Psoas muscle (tissue), 8 donors: ENCODE measurements at regions of chr2 and their contacts with region 1.

Region 1: DNA sequence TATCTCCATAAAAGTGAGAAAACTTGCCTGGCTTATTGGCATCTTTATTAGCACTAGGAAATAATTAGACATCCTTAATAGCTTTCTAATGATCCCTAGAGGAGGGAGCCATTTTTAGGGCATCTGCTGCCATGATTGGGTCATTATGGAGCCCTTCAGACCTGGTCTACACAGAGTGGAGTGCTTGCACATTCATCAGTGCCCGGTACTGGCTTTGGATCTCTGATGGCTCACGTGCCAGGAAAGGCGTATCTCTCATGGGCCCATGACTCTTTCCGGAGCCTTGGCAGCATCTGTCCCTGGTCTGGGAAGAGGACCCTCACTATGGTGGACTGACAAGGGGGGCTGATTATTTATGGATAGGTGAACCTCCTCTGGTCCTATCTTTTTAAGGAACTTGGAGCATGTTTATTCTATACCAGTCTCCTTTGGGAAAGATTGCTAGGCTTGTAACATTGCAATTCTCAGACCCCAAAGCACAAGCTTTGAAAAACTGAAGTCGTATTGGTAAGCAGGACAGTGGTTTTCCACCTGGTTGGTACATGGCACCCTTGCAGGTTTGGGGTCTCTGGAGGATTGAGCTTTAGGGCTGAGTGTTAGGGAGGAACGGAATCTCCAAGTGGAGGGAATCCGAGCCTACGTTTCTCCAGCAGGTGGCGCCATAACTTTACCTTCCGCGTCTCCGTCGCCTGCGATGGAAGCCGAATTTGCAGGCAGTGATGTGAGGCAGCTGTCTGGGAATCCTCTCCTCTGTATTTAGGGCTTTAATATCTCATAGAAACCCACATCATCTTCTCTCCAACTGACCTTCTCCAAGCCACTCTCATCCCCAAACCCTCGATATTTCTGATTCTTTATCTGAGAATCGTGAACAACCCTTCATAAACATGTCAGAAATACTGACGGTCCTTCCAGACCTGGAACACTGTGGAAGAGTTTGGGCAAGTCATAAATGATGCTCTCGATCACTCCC is 27.8 kb downstream of the SIX2 start:
- DNase-seq: peak; percentile 71 to 84
- ATAC-seq: peak; percentile 84 to 99 (median 90)
- H3K4me3 ChIP-seq: no peak overlapping the region
- H3K27ac ChIP-seq: no peak overlapping the region
- H3K4me1 ChIP-seq: no peaks in the 10 kb centered on the region
- H3K27me3 ChIP-seq: no peaks in the 10 kb centered on the region
- CTCF ChIP-seq: peak; percentile 91

Region 2: GRCh38 chr2:45494269-45494977 is 513.0 kb after region 1 on chr2:
- intact Hi-C with region 1: loop called (anchors 1 to 2 kb)
- DNase-seq: no peak
- ATAC-seq: peak; percentile 42 to 76 (median 54)
- H3K4me3 ChIP-seq: no peak overlapping the region
- H3K27ac ChIP-seq: no peak overlapping the region
- H3K4me1 ChIP-seq: no peaks in the 10 kb centered on the region
- H3K27me3 ChIP-seq: no peaks in the 10 kb centered on the region
- CTCF ChIP-seq: peak; percentile 86